T-cell (primary cell): ENCODE measurements at regions of chr3 and their contacts with region 1.

Region 1: DNA sequence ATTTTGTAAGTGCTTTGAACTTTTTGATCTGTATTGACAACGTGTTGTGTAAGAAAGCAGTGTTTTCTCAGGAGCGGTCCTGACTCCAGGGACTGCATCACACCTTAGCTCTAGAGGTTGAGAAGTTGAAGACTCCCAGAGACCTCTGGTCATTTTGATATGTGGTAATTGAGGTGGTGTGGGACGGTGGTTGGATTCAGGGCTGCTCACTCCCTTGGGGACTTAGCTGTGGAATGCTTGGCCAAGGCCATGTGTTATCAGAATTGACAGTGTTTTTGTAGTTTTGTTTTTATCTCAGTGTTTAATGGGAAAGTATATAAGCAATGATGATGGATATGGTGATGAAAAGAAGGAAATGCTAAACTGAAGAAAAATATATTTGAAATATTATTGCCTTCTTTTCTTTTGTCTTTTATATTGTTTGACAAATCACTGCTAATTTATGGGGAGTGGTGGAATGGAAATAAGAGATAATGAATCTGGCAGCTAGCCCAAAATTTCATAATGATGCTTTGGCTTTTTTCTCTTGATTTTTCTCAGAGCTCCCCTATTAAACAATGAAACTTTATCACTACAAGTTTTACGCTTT is 16.0 kb downstream of the CMSS1 start:
- DNase-seq: no peak
- ATAC-seq: no peak
- H3K4me3 ChIP-seq: no peak overlapping the region
- H3K4me3 Mint-ChIP-seq: no peak overlapping the region
- H3K27ac ChIP-seq: no peak overlapping the region
- H3K27ac Mint-ChIP-seq: no peak overlapping the region
- H3K4me1 ChIP-seq: no peaks in the 10 kb centered on the region
- H3K4me1 Mint-ChIP-seq: peaks cover 0 to 10% (median 4%) of the 10 kb centered on the region in 3 donors
- H3K27me3 ChIP-seq: no peaks in the 10 kb centered on the region
- H3K27me3 Mint-ChIP-seq: no peaks in the 10 kb centered on the region

Region 2: GRCh38 chr3:99846462-99847160 is 12.9 kb after region 1 on chr3:
- CTCF ChIA-PET with region 1: interaction called, 4 to 11 read pairs
- POLR2A ChIA-PET with region 1: interaction called in 1 of 2 experiments, 4 read pairs
- DNase-seq: no peak
- ATAC-seq: no peak
- H3K4me3 ChIP-seq: no peak overlapping the region
- H3K4me3 Mint-ChIP-seq: no peak overlapping the region
- H3K27ac ChIP-seq: no peak overlapping the region
- H3K27ac Mint-ChIP-seq: no peak overlapping the region
- H3K4me1 ChIP-seq: no peaks in the 10 kb centered on the region
- H3K4me1 Mint-ChIP-seq: peaks cover 4 to 6% (median 5%) of the 10 kb centered on the region in 3 donors
- H3K27me3 ChIP-seq: no peaks in the 10 kb centered on the region
- H3K27me3 Mint-ChIP-seq: no peaks in the 10 kb centered on the region

Region 3: GRCh38 chr3:100254168-100254777 is 420.6 kb after region 1 on chr3:
- CTCF ChIA-PET with region 1: interaction called, 10 to 30 read pairs
- POLR2A ChIA-PET with region 1: no interaction called
- DNase-seq: peak in 14 of 35 experiments; percentile 3 to 61 (median 14)
- ATAC-seq: peak in 3 of 4 experiments; percentile 65 to 76 (median 71)
- H3K4me3 ChIP-seq: no peak overlapping the region
- H3K4me3 Mint-ChIP-seq: no peak overlapping the region
- H3K27ac ChIP-seq: no peak overlapping the region
- H3K27ac Mint-ChIP-seq: no peak overlapping the region
- H3K4me1 ChIP-seq: no peaks in the 10 kb centered on the region
- H3K4me1 Mint-ChIP-seq: peaks cover 0 to 10% (median 5%) of the 10 kb centered on the region in 3 donors
- H3K27me3 ChIP-seq: no peaks in the 10 kb centered on the region
- H3K27me3 Mint-ChIP-seq: no peaks in the 10 kb centered on the region

Region 4: DNA sequence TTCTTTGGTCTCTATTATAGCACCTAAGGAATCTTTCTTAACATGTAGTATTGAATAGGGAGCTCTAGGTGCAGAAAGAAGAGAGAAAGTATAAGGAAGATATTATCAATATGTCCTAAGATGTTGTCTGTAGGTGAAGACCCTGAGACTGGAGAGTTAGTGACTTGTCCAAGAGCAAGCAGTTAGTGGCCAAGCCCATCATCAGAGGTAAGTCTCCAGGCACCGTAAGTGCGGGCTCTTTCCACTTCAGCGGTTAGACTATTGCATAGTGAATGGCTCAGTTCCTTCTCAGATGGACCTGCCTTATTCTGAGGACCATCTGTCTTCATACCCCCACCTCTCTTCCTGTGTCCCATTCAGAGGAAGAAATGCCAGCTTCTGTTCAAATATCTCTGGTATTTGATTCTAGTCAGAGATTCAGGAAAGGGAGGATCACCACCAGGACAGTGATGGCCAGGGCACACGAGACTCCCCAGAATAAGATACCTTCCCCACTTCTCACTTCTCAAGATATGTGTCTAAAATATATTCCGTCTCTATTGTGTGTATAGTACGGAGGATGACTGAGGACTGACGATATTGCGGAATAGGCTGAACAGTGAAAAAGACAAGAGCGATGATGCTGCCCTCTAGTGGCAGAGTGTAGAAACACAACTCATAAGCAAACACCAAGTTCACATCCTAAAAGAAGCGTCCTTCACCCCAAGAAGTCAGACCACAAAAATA is 756.6 kb after region 1 on chr3:
- CTCF ChIA-PET with region 1: interaction called, 5 to 10 read pairs
- POLR2A ChIA-PET with region 1: no interaction called
- DNase-seq: peak in 34 of 35 experiments; percentile 17 to 84 (median 42)
- ATAC-seq: peak; percentile 80 to 86 (median 82)
- H3K4me3 ChIP-seq: no peak overlapping the region
- H3K4me3 Mint-ChIP-seq: peak overlapping the region in 2 of 3 donors; percentile 1 to 37
- H3K27ac ChIP-seq: no peak overlapping the region
- H3K27ac Mint-ChIP-seq: no peak overlapping the region
- H3K4me1 ChIP-seq: peaks cover 0 to 2% of the 10 kb centered on the region in 2 experiments
- H3K4me1 Mint-ChIP-seq: peaks cover 3 to 7% (median 5%) of the 10 kb centered on the region in 3 donors
- H3K27me3 ChIP-seq: no peaks in the 10 kb centered on the region
- H3K27me3 Mint-ChIP-seq: no peaks in the 10 kb centered on the region